HEK293 (cell line): ENCODE measurements at regions of chr16 and their contacts with region 1.

Region 1: GRCh38 chr16:89700100-89700648 is 1.3 kb downstream of the SPATA2L start:
- H3K4me3 ChIP-seq: peak overlapping the region; percentile 68
- H3K27ac ChIP-seq: peak overlapping the region; percentile 65
- H3K4me1 ChIP-seq: peaks cover 8% of the 10 kb centered on the region
- CTCF ChIP-seq: peak; percentile 90

Region 2: DNA sequence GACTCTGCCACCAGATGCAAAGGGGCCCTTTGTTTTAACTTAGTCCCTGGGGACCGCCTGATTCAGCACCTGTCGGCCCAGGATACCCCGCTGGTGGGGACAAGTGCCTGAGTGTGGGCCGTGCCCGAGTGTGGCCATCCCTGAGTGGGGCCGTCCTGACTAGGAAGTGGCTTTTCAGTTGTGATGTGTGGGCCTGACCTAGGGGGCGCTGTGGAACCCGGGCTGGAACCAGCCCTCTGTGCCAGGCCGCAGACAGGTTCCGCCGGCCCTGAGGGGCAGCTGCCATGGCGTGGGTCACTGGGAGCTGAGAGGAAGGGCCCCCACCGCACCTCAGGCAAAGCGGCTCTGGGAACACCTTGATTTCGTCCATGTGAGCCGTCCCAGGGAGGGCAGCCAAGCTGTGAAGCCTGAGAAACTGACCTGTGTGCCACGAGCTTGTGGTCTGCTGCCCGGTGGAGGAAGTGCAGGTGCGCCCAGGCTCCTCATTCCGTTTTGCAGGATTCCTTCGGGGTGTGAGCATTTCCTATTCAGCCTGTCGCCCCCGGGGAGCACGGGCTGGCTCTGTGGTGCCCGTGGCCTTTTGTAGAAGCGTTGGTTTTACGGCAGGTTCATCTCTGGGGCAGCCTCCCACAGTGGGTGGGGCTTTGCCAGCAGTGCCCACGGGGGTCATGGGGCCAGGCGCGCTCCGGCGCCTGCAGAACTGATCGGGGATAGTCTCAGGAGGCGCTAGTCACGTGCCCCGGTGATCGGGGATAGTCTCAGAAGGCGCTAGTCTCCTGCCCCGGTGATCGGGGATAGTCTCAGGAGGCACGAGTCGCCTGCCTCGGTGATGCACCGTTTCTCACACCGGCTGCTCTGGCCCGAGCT is 134.4 kb before region 1 on chr16:
- CTCF ChIA-PET with region 1: no interaction called
- POLR2A ChIA-PET with region 1: interaction called, 17 read pairs
- H3K4me3 ChIP-seq: no peak overlapping the region
- H3K27ac ChIP-seq: peak overlapping the region; percentile 67
- H3K4me1 ChIP-seq: peaks cover 9% of the 10 kb centered on the region
- CTCF ChIP-seq: peak; percentile 98

Region 3: GRCh38 chr16:89711601-89712273 is 11.6 kb after region 1 on chr16:
- CTCF ChIA-PET with region 1: interaction called, 18 read pairs
- POLR2A ChIA-PET with region 1: interaction called, 4 read pairs
- H3K4me3 ChIP-seq: peak overlapping the region; percentile 62
- H3K27ac ChIP-seq: peak overlapping the region; percentile 49; the same call in 1 of the 2 replicates
- H3K4me1 ChIP-seq: no peaks in the 10 kb centered on the region
- CTCF ChIP-seq: no peak

Region 4: DNA sequence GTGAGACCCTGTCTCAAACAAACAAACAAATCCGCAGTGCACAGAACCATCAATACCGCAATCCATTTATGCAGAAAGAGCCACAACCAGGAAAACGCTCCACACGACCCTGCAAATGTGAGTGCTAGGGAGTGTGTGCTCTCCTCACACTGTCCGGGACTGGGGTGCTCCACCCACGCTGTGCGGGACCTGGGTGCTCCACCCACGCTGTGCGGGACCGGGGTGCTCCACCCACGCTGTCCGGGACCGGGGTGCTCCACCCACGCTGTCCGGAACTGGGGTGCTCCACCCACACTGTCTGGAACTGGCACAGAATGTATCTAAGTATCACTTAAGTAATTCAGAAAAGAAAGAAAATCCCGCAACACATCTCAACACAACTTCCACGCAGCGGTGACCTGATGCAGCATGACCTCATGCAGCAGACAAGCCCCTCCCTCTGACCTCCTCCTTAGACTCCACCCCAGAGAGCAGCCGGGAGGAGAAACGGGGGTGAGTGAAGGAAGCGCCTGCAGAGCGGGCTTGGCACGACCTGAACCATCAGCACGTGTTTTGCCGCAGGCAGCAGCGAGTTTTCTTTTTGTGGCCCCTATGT is 59.7 kb after region 1 on chr16:
- CTCF ChIA-PET with region 1: no interaction called
- POLR2A ChIA-PET with region 1: no interaction called
- H3K4me3 ChIP-seq: no peak overlapping the region
- H3K27ac ChIP-seq: no peak overlapping the region
- H3K4me1 ChIP-seq: no peaks in the 10 kb centered on the region
- CTCF ChIP-seq: no peak

Region 5: DNA sequence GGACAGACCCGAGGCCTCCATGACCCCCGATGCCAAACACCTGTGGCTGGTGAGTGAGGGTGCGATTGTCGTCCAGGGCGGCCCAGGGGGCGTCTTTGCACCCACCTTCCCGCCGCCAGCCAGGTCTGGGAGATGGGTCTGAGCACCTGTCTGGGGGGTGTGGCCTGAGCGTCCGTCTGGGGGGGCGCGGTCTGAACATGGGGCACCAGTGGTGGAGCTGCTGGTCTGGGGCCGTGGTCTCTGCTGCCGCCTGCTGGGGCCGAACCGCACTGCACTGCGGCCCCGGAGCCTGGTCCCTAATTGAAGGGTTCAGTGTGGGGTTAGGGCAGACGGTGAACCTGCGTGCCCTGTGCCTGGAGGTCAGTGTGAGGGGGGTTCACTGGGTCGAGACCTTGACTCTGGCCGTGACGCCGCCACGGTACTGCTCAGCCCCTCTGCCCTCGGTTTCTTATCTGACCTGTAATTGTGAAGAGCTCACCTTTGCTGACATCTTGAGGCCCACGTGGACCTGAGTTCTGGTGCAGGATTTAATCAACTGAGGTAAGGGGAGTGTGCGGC is 160.7 kb after region 1 on chr16:
- CTCF ChIA-PET with region 1: interaction called, 23 read pairs
- POLR2A ChIA-PET with region 1: no interaction called
- H3K4me3 ChIP-seq: no peak overlapping the region
- H3K27ac ChIP-seq: no peak overlapping the region
- H3K4me1 ChIP-seq: no peaks in the 10 kb centered on the region
- CTCF ChIP-seq: peak; percentile 95

Region 6: DNA sequence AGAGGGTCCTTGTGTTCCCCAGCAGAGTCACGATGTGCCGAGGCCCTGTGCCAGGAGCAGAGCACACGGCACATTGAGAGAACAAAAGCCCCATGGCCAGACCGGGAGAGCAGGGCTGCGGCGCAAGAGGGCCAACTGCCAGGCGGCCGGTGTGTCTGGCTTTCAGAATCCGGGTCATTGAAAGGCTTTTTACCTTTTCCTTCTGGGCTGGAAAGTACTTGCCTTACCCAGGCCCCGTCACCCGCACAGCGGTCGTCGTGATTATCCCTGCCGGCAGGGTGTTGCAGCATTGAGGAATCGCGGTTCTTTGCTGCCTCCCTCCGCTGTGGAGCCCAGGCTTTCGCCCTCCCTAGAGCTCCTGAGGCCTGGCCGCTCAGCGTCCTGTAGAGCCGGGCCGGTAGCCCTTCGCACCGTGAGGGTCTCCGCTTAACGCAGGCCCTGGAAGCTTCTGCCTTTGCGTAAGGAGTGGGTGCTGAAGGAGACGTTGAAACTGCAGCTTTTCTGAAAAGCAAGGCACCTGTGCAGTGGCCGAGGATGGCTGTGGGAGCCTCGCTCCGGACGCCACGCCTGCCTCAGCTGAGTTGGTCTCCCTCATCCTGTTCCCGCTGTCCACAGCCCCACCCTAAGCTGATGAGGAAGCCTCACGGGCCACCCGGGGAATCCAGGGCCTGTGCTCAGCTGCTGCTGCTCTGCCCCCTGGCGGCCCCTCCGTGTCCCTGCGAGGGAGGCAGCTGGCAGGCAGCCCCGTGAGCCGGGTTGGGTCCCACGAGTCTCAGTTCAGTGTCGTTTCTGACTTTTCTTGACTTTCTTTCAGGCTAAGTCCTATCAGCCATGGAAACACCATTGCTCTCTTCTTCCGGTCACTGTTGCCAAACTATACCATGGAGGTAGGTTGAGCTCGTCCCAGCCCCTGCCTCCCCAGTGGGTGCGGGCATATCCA is 209.9 kb after region 1 on chr16:
- CTCF ChIA-PET with region 1: interaction called, 20 read pairs
- POLR2A ChIA-PET with region 1: interaction called, 3 read pairs
- H3K4me3 ChIP-seq: no peak overlapping the region
- H3K27ac ChIP-seq: no peak overlapping the region
- H3K4me1 ChIP-seq: no peaks in the 10 kb centered on the region
- CTCF ChIP-seq: peak; percentile 79